Endothelial cell of umbilical vein (primary cell): ENCODE measurements at regions of chr3 and their contacts with region 1.

Region 1: GRCh38 chr3:57974796-57975388 is 33.3 kb upstream of the FLNB start:
- DNase-seq: peak; percentile 86
- H3K4me3 ChIP-seq: no peak overlapping the region
- H3K27ac ChIP-seq: peak overlapping the region; percentile 94
- H3K4me1 ChIP-seq: peaks cover 47% of the 10 kb centered on the region
- H3K27me3 ChIP-seq: no peaks in the 10 kb centered on the region
- CTCF ChIP-seq: no peak
- POLR2A ChIP-seq: no peak

Region 2: DNA sequence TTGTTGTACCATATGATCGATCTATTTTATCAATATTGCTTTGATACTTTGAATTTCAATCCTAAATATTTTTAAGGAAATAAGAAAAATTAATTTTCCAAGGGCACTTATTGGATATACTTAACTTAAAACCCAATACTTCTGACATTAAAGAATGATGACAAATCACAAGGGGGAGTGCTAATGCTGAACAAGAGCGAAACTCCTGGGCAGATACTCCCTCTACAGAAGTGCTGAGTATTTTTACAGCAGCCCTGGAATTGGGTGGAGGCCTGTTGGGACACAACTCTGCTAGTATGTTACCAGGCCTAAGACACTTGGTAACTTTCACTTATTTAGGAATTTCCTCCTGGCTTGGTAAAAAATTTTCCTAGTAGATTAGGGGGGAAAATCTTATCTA is 328.2 kb before region 1 on chr3:
- CTCF ChIA-PET with region 1: no interaction called
- POLR2A ChIA-PET with region 1: no interaction called
- dilution Hi-C with region 1: no loop called
- intact Hi-C with region 1: no loop called
- DNase-seq: peak; percentile 34
- H3K4me3 ChIP-seq: no peak overlapping the region
- H3K27ac ChIP-seq: no peak overlapping the region
- H3K4me1 ChIP-seq: no peaks in the 10 kb centered on the region
- H3K27me3 ChIP-seq: no peaks in the 10 kb centered on the region
- CTCF ChIP-seq: no peak
- POLR2A ChIP-seq: no peak

Region 3: DNA sequence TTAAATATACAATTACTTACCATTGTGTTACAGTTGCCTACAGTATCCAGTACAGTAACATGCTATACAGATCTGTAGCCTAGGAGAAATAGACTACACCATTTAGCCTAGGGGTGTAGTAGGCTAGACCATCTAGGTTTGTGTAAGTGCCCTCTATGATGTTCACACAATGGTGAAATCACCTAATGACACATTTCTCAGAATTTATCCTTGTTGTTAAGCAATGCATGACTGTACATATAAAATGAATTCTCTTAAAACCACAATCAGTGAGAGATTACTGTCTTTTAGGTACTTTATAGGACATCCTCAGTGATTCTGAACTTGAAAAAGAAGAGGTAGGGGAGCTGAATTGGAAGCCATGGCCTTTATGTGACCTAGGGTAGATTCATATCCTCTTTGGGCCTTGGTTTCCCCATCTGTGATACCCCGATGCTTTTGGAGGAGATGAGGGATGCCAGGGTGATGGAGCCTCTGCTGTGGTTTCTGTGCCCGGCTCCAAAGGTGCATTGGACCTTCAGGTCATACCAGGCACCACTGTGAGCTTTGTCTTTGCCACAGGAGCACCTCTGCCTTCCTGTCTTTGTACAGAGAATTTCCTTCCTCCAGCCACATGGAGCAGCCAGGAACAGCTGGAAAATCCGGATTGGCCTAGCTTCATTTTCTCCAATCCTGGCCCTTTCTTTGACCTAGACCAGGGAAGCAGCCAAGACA is 18.6 kb before region 1 on chr3:
- CTCF ChIA-PET with region 1: interaction called, 6 read pairs
- POLR2A ChIA-PET with region 1: interaction called, 8 read pairs
- dilution Hi-C with region 1: no loop called
- intact Hi-C with region 1: loop called (anchors 1 kb)
- DNase-seq: peak; percentile 32
- H3K4me3 ChIP-seq: no peak overlapping the region
- H3K27ac ChIP-seq: peak overlapping the region; percentile 74
- H3K4me1 ChIP-seq: peaks cover 47% of the 10 kb centered on the region
- H3K27me3 ChIP-seq: no peaks in the 10 kb centered on the region
- CTCF ChIP-seq: no peak
- POLR2A ChIP-seq: no peak

Region 4: DNA sequence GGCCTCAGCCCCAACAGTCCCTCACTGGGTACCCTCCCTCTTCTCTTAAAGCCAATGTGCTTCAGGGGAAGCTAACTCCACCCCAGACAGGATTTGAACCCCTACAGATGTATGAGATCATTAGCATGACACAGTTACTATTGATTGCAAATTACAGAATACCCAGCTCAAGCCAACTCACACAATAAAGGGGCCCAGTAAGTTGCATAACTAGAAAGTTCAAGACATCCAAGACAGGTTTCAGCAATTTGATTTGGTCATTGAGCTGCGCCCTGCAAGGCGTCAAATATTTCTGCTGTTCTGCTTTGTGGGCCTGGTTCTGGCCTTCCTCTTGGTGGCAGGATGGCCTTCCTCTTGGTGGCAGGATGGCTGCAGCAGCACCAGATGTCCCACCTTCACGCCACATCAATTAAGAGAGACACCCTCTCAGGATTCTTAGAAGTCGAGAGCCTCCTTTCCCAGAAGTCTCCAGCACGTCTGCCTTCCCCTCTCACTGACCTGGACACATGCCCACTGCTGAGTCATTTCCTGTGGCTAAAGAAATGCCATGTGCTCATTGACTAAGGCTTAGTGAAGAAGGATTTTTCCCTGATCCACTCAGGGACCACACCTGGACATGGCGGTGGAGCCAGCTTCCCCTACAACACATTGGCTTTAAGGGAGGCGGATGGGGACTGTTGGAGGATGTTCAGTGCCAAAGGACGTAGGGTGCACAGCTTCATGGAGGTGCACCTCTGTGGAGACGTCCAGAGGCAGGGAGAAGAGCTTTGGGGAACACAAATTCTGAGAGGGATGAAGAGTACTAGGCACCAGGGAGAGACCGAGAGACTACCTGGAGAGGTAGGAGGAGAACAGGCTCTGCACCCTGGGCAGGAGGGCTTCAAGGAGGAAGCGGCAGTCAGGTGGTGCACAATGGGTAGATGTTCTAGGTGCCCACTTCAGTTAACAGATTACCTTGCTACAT is 186.8 kb after region 1 on chr3:
- CTCF ChIA-PET with region 1: no interaction called
- POLR2A ChIA-PET with region 1: no interaction called
- dilution Hi-C with region 1: no loop called
- intact Hi-C with region 1: loop called (anchors 5 kb)
- DNase-seq: peak; percentile 96
- H3K4me3 ChIP-seq: no peak overlapping the region
- H3K27ac ChIP-seq: peak overlapping the region; percentile 76
- H3K4me1 ChIP-seq: peaks cover 41% of the 10 kb centered on the region
- H3K27me3 ChIP-seq: no peaks in the 10 kb centered on the region
- CTCF ChIP-seq: no peak
- POLR2A ChIP-seq: peak; percentile 74